Activated naive CD4-positive, alpha-beta T cell treated with anti-CD3 and anti-CD28 coated beads for 36 hours (primary cell): ENCODE measurements at regions of chr1 and their contacts with region 1.

Region 1: DNA sequence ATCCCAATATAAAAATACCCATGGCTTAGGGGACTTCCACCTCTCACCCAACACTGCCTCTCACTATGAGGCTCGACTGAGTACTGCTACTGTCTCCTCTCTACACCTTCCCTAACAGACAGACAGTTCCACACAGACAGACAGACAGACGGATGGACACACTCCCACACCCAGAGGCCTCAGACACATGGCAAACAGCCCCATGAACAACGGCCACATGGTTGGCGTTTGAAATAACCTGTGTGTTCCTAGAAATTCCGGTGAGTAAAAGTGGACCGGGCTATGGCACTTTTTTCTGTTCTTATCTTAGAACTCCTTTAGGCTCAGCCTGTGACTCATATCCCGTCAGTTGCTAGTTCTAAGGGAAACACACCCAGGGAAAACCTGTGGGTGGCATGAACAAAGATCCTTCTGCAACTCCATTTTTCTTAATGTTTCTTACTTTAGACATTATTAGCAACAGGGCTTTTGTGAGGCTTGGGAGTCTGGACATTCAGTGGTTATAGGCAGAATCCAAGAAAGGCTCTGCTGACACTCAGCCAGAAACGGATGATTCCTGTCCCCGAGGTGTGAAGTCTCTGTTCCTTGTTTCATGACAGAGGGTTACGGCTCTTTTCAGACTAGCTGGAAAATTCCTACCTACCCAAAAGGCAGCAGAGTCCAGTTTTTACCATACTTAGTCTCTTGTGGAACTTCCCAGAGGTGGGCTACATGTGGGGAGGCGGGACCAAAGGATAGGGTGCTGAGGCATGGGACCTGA is 90.5 kb upstream of the TLR5 start:
- DNase-seq: peak; percentile 39
- H3K4me3 Mint-ChIP-seq: no peak overlapping the region
- H3K27ac Mint-ChIP-seq: peak overlapping the region; percentile 2
- H3K4me1 Mint-ChIP-seq: peaks cover 63% of the 10 kb centered on the region
- H3K27me3 Mint-ChIP-seq: no peaks in the 10 kb centered on the region

Region 2: GRCh38 chr1:223183268-223183862 is 50.2 kb before region 1 on chr1:
- CTCF ChIA-PET with region 1: interaction called, 3 read pairs
- intact Hi-C with region 1: loop called (anchors 2 kb)
- DNase-seq: no peak
- H3K4me3 Mint-ChIP-seq: no peak overlapping the region
- H3K27ac Mint-ChIP-seq: no peak overlapping the region
- H3K4me1 Mint-ChIP-seq: peaks cover 45% of the 10 kb centered on the region
- H3K27me3 Mint-ChIP-seq: peaks cover 6% of the 10 kb centered on the region

Region 3: DNA sequence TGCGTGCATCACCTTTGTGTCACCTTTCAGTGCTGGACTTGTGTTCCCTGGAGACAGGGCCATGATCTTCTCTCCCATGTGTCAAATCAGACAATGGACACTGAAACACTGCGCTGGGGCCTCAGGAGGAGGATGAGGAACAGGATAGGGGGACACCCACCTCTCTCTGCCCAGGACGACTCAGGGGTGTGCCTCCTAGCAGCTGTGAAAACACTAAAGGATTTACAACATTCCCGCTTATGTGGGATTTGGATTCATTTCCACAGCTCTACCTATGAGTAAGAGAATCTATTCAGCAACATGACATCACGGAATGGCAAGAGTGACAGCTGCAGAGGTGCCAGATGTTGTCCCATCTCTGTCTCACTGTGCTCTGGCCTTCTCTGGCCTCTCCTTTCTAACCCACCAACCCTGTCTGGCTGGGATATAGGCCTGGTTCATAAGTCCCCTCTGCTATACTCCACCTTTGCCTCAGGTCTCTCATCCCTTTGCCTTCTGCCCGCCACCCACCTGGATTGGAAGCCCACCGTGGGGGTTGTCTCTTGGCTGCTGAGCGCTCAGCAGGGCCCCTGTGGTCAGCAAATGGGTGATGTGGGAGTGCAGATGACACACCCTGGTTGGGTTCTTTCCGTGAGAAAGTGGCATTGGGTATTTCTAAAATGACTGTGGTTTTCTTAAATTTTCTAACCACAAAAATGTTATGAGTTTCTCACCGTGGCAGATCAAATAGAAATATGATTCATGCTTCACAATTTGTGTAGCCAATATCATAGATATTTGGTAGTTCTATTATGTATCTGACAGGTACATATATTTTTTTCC is 43.5 kb before region 1 on chr1:
- CTCF ChIA-PET with region 1: no interaction called
- intact Hi-C with region 1: loop called (anchors 1 kb)
- DNase-seq: peak; percentile 76
- H3K4me3 Mint-ChIP-seq: no peak overlapping the region
- H3K27ac Mint-ChIP-seq: peak overlapping the region; percentile 67
- H3K4me1 Mint-ChIP-seq: peaks cover 41% of the 10 kb centered on the region
- H3K27me3 Mint-ChIP-seq: peaks cover 9% of the 10 kb centered on the region

Region 4: DNA sequence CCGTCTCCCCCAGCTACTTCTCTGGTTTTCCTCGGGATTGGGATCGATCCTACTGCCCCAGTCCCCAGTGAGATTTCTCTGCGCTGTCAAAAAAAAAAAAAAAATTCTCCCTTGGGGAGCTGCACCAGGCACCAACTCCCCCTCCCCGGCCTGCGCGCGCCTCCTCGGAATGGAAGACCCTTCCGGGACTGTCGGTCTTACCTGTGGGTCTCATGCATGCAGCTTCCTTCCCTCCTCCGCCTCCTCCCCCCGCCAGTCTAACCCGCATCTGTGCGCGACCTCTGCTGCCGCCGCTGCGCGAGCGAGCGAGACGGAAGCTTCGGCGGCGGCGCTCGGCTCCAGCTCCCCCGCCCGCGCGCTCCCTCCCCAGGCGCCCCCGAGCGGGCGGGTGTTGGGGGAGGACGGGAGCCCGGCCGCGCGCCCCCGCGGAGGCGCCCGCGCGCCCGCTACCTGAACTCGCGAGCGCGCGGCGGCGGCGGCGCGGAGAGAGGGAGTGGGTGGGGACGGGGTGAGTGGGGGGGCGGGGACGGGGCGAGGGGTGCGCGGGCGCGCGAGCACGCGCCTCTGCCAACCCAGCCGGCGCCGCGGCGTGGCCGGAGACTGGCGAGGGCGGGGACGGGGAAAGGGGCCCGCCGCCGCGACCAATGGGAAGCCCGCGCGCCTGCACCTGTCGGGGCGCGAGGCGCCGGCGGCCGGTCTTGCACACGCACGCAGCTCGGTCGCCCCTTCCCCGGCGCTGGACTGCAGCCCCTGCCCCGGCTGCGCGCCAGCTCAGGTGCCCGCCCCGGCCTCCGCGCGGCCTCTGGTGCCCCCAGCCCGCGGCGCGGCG is 130.5 kb after region 1 on chr1 and contains the start of gene SUSD4:
- CTCF ChIA-PET with region 1: interaction called, 3 read pairs
- intact Hi-C with region 1: loop called (anchors 5 kb)
- DNase-seq: peak; percentile 77
- H3K4me3 Mint-ChIP-seq: peak within 1 kb of the TSS; percentile 89
- H3K27ac Mint-ChIP-seq: no peak within 1 kb of the TSS
- H3K4me1 Mint-ChIP-seq: peaks cover 18% of the 10 kb centered on the region
- H3K27me3 Mint-ChIP-seq: peaks cover 10% of the 10 kb centered on the region
- total RNA-seq, gene SUSD4: 1.1 to 1.8 TPM

Region 5: DNA sequence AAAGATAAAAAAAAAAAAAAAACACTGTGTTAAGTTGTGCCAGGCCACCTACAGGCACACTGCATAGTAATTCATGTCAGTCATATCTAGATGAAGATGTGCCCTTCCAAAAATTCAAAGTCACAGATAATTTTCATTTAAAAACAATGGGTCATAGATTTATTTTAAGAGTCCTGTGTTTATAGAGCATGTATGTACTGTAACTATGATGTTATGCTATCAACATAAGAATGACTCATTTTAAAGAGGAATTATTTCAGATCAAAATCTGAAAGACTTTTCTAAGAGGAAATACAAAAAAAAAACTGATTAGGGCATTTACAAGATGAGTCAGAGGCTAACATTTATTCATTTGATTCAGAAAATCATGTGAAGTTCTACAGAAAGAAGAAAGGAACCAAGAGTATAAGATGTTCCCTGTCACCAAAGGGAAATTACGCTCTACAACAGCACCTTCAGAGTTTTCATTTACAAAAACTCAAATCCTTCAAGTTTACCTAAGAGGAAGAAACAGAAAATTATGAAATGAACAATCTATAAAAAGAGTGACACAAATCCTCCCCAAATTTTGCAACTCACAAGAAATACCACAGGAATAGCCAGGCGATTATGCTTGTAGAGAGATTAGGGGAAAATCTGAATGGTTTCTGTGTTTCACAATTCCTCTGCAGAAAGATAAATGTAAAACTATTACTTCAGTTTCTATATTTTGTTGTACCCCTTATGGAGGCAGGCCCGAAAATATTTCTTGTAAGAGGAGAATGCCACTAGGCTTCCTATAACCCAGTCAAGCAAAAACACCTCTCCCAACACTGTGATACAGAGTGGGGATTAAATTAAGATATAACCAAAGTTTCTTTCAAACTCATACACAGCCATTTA is 598.4 kb after region 1 on chr1:
- CTCF ChIA-PET with region 1: no interaction called
- intact Hi-C with region 1: loop called (anchors 5 kb)
- DNase-seq: peak; percentile 14
- H3K4me3 Mint-ChIP-seq: peak overlapping the region; percentile 28
- H3K27ac Mint-ChIP-seq: peak overlapping the region; percentile 93
- H3K4me1 Mint-ChIP-seq: peaks cover 28% of the 10 kb centered on the region
- H3K27me3 Mint-ChIP-seq: no peaks in the 10 kb centered on the region